Naive thymus-derived CD4-positive, alpha-beta T cell (primary cell): ENCODE measurements at regions of chr12 and their contacts with region 1.

Region 1: DNA sequence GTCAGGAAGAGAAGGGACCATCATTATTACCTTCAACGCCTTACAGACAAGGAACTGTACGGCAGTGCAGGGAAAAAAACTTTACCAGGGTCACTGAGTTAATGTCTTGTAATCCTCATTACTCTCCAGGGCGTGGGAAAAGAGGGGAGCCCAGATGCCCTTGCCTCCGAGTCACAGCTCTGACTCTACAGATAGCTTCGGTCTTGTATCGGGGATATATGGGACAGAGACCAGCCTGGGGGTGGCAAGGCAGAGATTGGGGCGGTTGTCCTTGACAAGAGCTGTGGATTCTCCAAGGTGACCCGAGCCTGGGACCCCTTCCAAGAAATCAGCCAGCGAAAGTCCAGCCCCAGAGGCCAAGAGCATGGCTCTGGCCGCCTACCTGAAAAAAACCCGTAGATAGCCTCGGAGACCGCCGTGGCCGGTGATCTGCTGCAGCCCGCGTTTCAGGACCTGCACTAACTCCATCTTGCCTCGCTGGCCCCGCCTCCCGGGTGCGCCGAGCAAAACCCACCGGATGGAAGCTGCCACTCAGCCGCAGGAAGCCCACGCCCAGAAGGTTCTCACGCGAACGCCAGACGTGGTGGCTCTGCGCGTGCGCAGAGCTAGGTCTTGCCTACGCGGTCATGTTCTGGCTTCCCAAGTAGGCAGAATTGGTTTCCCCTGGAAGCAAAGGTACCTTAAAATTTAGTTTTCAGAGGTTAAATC is at the start of gene NDUFA12:
- DNase-seq: peak; percentile 89 to 95 (median 92)
- ATAC-seq: peak; percentile 100
- H3K4me3 ChIP-seq: peak within 1 kb of the TSS; percentile 72
- H3K4me3 Mint-ChIP-seq: peak within 1 kb of the TSS; percentile 87 to 97 (median 96)
- H3K27ac ChIP-seq: peak within 1 kb of the TSS; percentile 84
- H3K27ac Mint-ChIP-seq: peak within 1 kb of the TSS; percentile 86 to 97 (median 95)
- H3K4me1 ChIP-seq: peaks cover 27 to 56% of the 10 kb centered on the region in 2 donors
- H3K4me1 Mint-ChIP-seq: peaks cover 39 to 79% (median 64%) of the 10 kb centered on the region in 7 donors
- H3K27me3 ChIP-seq: no peaks in the 10 kb centered on the region
- H3K27me3 Mint-ChIP-seq: no peaks in the 10 kb centered on the region
- total RNA-seq, gene NDUFA12: 57.8 to 123 (median 68.5) TPM

Region 2: DNA sequence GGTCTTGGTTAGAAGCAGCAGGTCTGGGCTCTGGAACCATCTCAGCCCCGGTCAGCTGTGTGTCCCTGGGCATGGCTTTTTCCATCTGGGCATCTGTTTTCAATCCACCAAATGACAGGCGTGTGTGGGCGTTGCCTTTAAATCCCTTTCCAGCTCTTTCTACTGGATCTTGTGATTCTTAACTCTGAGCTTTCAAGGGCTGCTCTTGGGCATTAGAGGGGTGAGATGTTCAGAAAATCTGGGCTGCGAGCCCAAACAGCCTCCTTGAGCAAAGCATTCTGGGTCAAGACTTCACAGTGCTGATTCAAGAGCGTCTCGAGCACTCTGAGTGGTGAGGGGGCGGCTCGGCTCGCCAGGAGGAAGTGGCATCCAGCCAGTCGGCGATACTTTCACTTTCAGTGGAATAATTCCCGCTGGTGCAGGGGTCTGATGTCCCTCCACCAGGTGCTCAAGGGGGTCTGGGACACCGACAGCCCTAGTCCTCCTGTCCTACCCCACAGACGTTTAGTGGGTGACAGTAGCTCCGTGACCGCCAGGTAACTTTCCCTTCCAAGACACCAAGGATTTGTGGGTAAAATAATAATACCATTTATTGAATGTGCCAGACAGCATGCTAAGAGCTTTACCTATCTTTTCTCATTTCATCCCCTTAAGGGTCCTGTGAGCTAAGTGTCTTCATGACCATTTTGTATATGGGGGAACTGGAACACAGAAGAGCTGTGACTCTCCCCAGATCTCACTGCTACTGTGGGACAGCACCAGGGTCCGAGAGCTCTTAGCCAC is 740.9 kb before region 1 on chr12:
- CTCF ChIA-PET with region 1: no interaction called
- POLR2A ChIA-PET with region 1: no interaction called
- intact Hi-C with region 1: loop called in 1 of 2 experiments (anchors 2 kb)
- DNase-seq: peak; percentile 50 to 81 (median 72)
- ATAC-seq: peak; percentile 89
- H3K4me3 ChIP-seq: peak overlapping the region; percentile 94
- H3K4me3 Mint-ChIP-seq: peak overlapping the region; percentile 80 to 99 (median 97)
- H3K27ac ChIP-seq: peak overlapping the region; percentile 91
- H3K27ac Mint-ChIP-seq: peak overlapping the region; percentile 91 to 100 (median 99)
- H3K4me1 ChIP-seq: peaks cover 15 to 18% of the 10 kb centered on the region in 2 donors
- H3K4me1 Mint-ChIP-seq: peaks cover 23 to 52% (median 46%) of the 10 kb centered on the region in 7 donors
- H3K27me3 ChIP-seq: no peaks in the 10 kb centered on the region
- H3K27me3 Mint-ChIP-seq: no peaks in the 10 kb centered on the region

Region 3: DNA sequence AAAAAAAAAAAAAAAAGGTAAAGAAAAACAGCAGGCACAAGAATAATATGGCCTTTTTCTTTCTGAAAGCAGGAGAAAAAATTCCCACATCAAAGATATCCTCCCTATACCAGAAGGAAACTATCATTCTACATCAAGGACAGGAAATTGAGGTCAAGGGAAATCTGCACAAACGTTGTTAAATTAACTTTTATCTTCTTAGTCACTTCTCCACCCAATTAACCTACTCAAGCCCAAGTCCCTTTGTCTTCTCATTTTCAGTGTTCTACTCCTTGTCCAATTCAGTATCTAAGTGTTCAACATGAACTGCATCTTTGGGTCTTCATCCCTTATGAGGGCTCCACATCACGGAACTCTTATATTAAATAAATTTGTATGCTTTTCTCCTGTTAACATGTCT is 15.6 kb before region 1 on chr12:
- CTCF ChIA-PET with region 1: interaction called, 5 read pairs
- POLR2A ChIA-PET with region 1: interaction called, 52 read pairs
- intact Hi-C with region 1: loop called (anchors 1 kb)
- DNase-seq: peak in 7 of 9 donors; percentile 58 to 75 (median 73)
- ATAC-seq: peak; percentile 72
- H3K4me3 ChIP-seq: no peak overlapping the region
- H3K4me3 Mint-ChIP-seq: peak overlapping the region; percentile 42 to 90 (median 64)
- H3K27ac ChIP-seq: peak overlapping the region; percentile 52
- H3K27ac Mint-ChIP-seq: peak overlapping the region; percentile 50 to 99 (median 97)
- H3K4me1 ChIP-seq: peaks cover 25 to 61% of the 10 kb centered on the region in 2 donors
- H3K4me1 Mint-ChIP-seq: peaks cover 40 to 95% (median 77%) of the 10 kb centered on the region in 7 donors
- H3K27me3 ChIP-seq: no peaks in the 10 kb centered on the region
- H3K27me3 Mint-ChIP-seq: no peaks in the 10 kb centered on the region

Region 4: GRCh38 chr12:95114766-95115450 is 111.5 kb after region 1 on chr12:
- CTCF ChIA-PET with region 1: no interaction called
- POLR2A ChIA-PET with region 1: no interaction called
- intact Hi-C with region 1: no loop called
- DNase-seq: no peak
- ATAC-seq: no peak
- H3K4me3 ChIP-seq: no peak overlapping the region
- H3K4me3 Mint-ChIP-seq: no peak overlapping the region
- H3K27ac ChIP-seq: no peak overlapping the region
- H3K27ac Mint-ChIP-seq: peak overlapping the region in 1 of 9 donors; percentile 28
- H3K4me1 ChIP-seq: no peaks in the 10 kb centered on the region
- H3K4me1 Mint-ChIP-seq: peaks cover 0 to 10% (median 0%) of the 10 kb centered on the region in 7 donors
- H3K27me3 ChIP-seq: no peaks in the 10 kb centered on the region
- H3K27me3 Mint-ChIP-seq: no peaks in the 10 kb centered on the region

Region 5: DNA sequence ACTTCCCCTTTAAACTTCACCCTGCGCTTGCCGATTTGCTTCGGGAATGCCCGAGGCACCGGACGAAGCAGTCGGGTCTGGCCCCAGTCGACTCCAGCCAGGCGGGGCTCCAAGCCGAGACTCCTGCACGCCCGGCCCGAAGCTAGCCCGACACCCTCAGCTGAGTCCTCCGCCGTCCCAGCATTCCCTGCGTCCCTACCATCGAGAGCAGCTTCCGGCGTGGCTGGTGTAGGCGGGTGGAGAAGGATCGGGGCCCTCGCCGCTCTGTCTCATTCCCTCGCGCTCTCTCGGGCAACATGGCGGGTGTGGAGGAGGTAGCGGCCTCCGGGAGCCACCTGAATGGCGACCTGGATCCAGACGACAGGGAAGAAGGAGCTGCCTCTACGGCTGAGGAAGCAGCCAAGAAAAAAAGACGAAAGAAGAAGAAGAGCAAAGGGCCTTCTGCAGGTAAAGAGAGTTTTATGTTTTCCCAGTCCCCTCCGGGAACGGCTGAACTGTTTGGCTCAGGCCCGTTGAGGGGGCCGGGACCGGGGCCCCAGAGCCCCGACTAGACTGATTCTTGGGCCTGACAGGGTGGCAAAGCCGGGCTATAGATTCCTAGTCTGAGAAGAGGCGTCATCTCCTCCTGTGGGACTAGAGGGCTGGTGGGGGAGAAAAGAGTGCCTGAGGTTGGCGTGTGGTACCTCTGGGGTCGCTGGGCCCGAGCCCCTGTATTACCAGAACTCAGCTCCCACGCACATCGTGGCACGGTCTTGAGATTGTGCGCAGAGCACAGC is 470.7 kb after region 1 on chr12 and contains the start of gene METAP2:
- CTCF ChIA-PET with region 1: no interaction called
- POLR2A ChIA-PET with region 1: no interaction called
- intact Hi-C with region 1: loop called (anchors 1 to 2 kb)
- DNase-seq: peak; percentile 75 to 93 (median 87)
- ATAC-seq: peak; percentile 98
- H3K4me3 ChIP-seq: peak within 1 kb of the TSS; percentile 81
- H3K4me3 Mint-ChIP-seq: peak within 1 kb of the TSS; percentile 96 to 100 (median 99)
- H3K27ac ChIP-seq: peak within 1 kb of the TSS; percentile 92
- H3K27ac Mint-ChIP-seq: peak within 1 kb of the TSS; percentile 95 to 100 (median 99)
- H3K4me1 ChIP-seq: peaks cover 10 to 39% of the 10 kb centered on the region in 2 donors
- H3K4me1 Mint-ChIP-seq: peaks cover 31 to 70% (median 55%) of the 10 kb centered on the region in 7 donors
- H3K27me3 ChIP-seq: no peaks in the 10 kb centered on the region
- H3K27me3 Mint-ChIP-seq: no peaks in the 10 kb centered on the region
- total RNA-seq, gene METAP2: 48.2 to 79.9 (median 57.3) TPM

Region 6: GRCh38 chr12:95942524-95943329 is 939.4 kb after region 1 on chr12 and contains the start of gene CCDC38:
- CTCF ChIA-PET with region 1: no interaction called
- POLR2A ChIA-PET with region 1: no interaction called
- intact Hi-C with region 1: loop called (anchors 2 kb)
- DNase-seq: peak; percentile 56 to 86 (median 82)
- ATAC-seq: peak; percentile 97
- H3K4me3 ChIP-seq: peak within 1 kb of the TSS; percentile 93
- H3K4me3 Mint-ChIP-seq: peak within 1 kb of the TSS; percentile 88 to 99 (median 96)
- H3K27ac ChIP-seq: peak within 1 kb of the TSS; percentile 86
- H3K27ac Mint-ChIP-seq: peak within 1 kb of the TSS; percentile 85 to 97 (median 89)
- H3K4me1 ChIP-seq: peaks cover 6% of the 10 kb centered on the region in 2 donors
- H3K4me1 Mint-ChIP-seq: peaks cover 4 to 12% (median 10%) of the 10 kb centered on the region in 7 donors
- H3K27me3 ChIP-seq: no peaks in the 10 kb centered on the region
- H3K27me3 Mint-ChIP-seq: peaks cover 0 to 26% (median 0%) of the 10 kb centered on the region in 5 donors
- total RNA-seq, gene CCDC38: 0.07 to 0.27 TPM in 2 of 5 experiments, not detected in the others